Activated CD4-positive, alpha-beta memory T cell treated with anti-CD3 and anti-CD28 coated beads for 36 hours (primary cell): ENCODE measurements at regions of chr2 and their contacts with region 1.

Region 1: GRCh38 chr2:68709421-68709911 is 25.1 kb upstream of the ARHGAP25 start:
- DNase-seq: peak; percentile 31
- H3K4me3 Mint-ChIP-seq: no peak overlapping the region
- H3K27ac Mint-ChIP-seq: peak overlapping the region; percentile 55
- H3K4me1 Mint-ChIP-seq: peaks cover 31% of the 10 kb centered on the region
- H3K27me3 Mint-ChIP-seq: no peaks in the 10 kb centered on the region

Region 2: GRCh38 chr2:68487773-68488355 is 221.6 kb before region 1 on chr2:
- CTCF ChIA-PET with region 1: interaction called, 12 read pairs
- POLR2A ChIA-PET with region 1: no interaction called
- intact Hi-C with region 1: no loop called
- DNase-seq: no peak
- H3K4me3 Mint-ChIP-seq: no peak overlapping the region
- H3K27ac Mint-ChIP-seq: no peak overlapping the region
- H3K4me1 Mint-ChIP-seq: peaks cover 2% of the 10 kb centered on the region
- H3K27me3 Mint-ChIP-seq: no peaks in the 10 kb centered on the region

Region 3: GRCh38 chr2:68689553-68690537 is 19.6 kb before region 1 on chr2:
- CTCF ChIA-PET with region 1: interaction called, 18 read pairs
- POLR2A ChIA-PET with region 1: no interaction called
- intact Hi-C with region 1: no loop called
- DNase-seq: peak; percentile 28
- H3K4me3 Mint-ChIP-seq: no peak overlapping the region
- H3K27ac Mint-ChIP-seq: peak overlapping the region; percentile 26
- H3K4me1 Mint-ChIP-seq: peaks cover 18% of the 10 kb centered on the region
- H3K27me3 Mint-ChIP-seq: peaks cover 8% of the 10 kb centered on the region

Region 4: DNA sequence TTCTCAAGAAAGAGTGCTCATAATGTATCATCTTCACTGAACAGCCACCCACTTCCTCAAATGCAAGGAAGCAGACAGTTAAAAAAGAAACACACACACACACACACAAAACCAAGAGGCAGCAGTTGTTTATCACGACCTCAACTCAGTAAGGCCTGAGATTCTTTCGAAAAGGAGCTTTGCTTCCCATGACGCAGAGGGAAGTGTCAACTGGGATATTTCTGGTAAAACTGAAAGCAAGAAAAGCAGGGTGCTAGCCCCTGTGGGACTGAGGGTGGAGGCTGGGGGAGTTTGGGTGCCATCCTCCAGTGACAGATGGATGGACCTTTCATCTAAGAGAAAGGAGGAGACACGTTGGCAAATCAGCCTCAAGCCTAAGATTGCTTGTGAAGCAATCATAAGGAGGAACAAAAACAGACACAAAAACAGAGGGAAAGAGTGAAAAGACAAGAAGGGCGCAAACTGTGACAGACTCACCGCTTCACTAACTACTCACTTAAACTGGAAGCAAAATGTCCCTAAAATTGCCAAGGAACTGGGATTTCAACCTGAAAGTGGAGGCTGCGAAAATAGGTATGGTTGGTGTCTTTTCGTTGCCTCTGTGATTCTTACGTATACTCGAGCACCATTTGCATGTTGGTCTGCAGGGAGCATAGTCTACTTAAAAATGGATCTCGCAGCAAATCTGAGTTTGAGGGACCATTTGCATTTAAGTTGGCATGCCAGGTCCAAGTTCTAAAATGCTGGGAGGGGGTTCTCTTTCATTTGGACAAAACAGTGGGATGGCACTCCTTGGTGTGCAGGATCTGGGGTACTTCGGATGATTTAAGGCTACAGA is 25.4 kb after region 1 on chr2 and contains the start of gene ARHGAP25:
- CTCF ChIA-PET with region 1: interaction called, 16 read pairs
- POLR2A ChIA-PET with region 1: interaction called, 4 read pairs
- intact Hi-C with region 1: no loop called
- DNase-seq: peak; percentile 87
- H3K4me3 Mint-ChIP-seq: no peak within 1 kb of the TSS
- H3K27ac Mint-ChIP-seq: no peak within 1 kb of the TSS
- H3K4me1 Mint-ChIP-seq: peaks cover 36% of the 10 kb centered on the region
- H3K27me3 Mint-ChIP-seq: no peaks in the 10 kb centered on the region
- total RNA-seq, gene ARHGAP25: 79.8 to 87.7 TPM

Region 5: GRCh38 chr2:68751397-68752339 is 42.2 kb after region 1 on chr2:
- CTCF ChIA-PET with region 1: interaction called, 47 read pairs
- POLR2A ChIA-PET with region 1: no interaction called
- intact Hi-C with region 1: no loop called
- DNase-seq: peak; percentile 95
- H3K4me3 Mint-ChIP-seq: peak overlapping the region; percentile 30
- H3K27ac Mint-ChIP-seq: peak overlapping the region; percentile 79
- H3K4me1 Mint-ChIP-seq: peaks cover 85% of the 10 kb centered on the region
- H3K27me3 Mint-ChIP-seq: no peaks in the 10 kb centered on the region

Region 6: GRCh38 chr2:68837164-68837860 is 127.8 kb after region 1 on chr2:
- CTCF ChIA-PET with region 1: interaction called, 13 read pairs
- POLR2A ChIA-PET with region 1: no interaction called
- intact Hi-C with region 1: no loop called
- DNase-seq: peak; percentile 77
- H3K4me3 Mint-ChIP-seq: no peak overlapping the region
- H3K27ac Mint-ChIP-seq: peak overlapping the region; percentile 63
- H3K4me1 Mint-ChIP-seq: peaks cover 47% of the 10 kb centered on the region
- H3K27me3 Mint-ChIP-seq: no peaks in the 10 kb centered on the region

Region 7: GRCh38 chr2:68925295-68925896 is 215.9 kb after region 1 on chr2:
- CTCF ChIA-PET with region 1: interaction called, 118 read pairs
- POLR2A ChIA-PET with region 1: no interaction called
- intact Hi-C with region 1: loop called (anchors 1 kb)
- DNase-seq: peak; percentile 57
- H3K4me3 Mint-ChIP-seq: no peak overlapping the region
- H3K27ac Mint-ChIP-seq: no peak overlapping the region
- H3K4me1 Mint-ChIP-seq: peaks cover 6% of the 10 kb centered on the region
- H3K27me3 Mint-ChIP-seq: no peaks in the 10 kb centered on the region